ENCODE measurements at regions of chr5 and their contacts with region 1.

Region 1: GRCh38 chr5:175478384-175479124 is at the start of gene SFXN1:
- DNase-seq: peak; percentile 86
- H3K4me3 Mint-ChIP-seq: peak within 1 kb of the TSS; percentile 94
- H3K27ac Mint-ChIP-seq: peak within 1 kb of the TSS; percentile 97
- H3K4me1 Mint-ChIP-seq: peaks cover 56% of the 10 kb centered on the region
- H3K27me3 Mint-ChIP-seq: no peaks in the 10 kb centered on the region
- total RNA-seq, gene SFXN1: 350 to 358 TPM

Region 2: DNA sequence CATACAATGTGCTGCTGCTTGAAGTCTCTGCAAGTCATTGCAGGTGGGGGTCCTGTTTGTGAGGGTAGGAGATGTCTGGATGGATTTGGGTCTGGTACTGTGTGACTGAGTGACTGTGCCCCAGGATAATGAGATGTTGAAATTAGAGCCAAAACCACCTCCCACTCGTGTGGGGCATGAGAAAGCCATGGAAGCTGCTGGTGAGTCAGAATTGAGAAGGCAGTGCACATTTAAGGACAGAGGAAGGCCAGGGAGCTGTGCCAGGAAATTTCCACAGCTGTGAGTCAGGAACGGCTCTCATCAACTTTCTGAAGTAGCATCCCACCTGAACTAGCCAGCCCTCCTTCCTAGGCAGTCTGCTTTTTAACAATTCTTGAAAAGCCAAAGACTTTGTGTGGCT is 264.4 kb before region 1 on chr5:
- CTCF ChIA-PET with region 1: no interaction called
- intact Hi-C with region 1: no loop called
- DNase-seq: no peak
- H3K4me3 Mint-ChIP-seq: no peak overlapping the region
- H3K27ac Mint-ChIP-seq: no peak overlapping the region
- H3K4me1 Mint-ChIP-seq: no peaks in the 10 kb centered on the region
- H3K27me3 Mint-ChIP-seq: peaks cover 17% of the 10 kb centered on the region

Region 3: DNA sequence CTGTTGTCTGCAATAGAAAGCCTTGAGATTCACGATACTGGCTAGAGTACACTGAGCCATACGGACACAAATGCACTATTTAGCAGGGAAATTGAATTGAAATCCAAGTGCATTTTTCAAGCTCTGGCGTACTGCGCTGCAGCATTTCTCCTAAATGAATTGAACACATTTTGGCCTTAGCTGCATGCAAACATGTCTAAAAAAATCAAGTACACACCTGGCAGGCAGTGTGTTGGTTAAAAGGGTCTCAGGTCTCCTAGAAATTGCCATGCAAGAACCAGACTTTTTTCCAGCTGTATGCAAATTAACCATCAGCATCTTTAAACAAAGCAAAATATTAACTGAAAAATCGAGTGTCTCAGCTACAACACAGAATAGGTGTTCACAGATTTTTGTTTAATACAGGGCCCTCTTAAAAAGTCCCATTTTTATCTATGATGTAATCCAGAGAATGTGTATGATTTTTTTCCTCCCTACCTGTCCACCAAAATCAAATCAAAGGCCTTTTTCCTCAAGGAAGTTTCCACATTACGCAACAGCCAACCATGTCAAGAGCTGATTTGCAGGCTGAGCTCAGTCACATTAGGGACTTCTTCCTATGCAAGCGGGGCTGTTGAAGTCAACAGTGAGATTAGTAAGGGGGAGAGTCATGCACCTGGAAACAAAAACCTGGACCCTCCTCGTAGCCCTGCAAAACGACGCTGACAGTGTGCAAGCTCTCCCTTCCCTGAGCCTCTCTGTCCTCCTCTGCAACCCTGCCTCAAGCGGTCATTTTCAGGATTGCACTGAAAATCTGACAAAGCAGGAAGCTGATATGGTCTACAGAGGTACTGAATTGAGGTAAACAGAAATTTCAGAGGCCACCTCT is 14.2 kb before region 1 on chr5:
- CTCF ChIA-PET with region 1: interaction called, 31 read pairs
- intact Hi-C with region 1: no loop called
- DNase-seq: peak; percentile 90
- H3K4me3 Mint-ChIP-seq: no peak overlapping the region
- H3K27ac Mint-ChIP-seq: no peak overlapping the region
- H3K4me1 Mint-ChIP-seq: peaks cover 16% of the 10 kb centered on the region
- H3K27me3 Mint-ChIP-seq: no peaks in the 10 kb centered on the region

Region 4: DNA sequence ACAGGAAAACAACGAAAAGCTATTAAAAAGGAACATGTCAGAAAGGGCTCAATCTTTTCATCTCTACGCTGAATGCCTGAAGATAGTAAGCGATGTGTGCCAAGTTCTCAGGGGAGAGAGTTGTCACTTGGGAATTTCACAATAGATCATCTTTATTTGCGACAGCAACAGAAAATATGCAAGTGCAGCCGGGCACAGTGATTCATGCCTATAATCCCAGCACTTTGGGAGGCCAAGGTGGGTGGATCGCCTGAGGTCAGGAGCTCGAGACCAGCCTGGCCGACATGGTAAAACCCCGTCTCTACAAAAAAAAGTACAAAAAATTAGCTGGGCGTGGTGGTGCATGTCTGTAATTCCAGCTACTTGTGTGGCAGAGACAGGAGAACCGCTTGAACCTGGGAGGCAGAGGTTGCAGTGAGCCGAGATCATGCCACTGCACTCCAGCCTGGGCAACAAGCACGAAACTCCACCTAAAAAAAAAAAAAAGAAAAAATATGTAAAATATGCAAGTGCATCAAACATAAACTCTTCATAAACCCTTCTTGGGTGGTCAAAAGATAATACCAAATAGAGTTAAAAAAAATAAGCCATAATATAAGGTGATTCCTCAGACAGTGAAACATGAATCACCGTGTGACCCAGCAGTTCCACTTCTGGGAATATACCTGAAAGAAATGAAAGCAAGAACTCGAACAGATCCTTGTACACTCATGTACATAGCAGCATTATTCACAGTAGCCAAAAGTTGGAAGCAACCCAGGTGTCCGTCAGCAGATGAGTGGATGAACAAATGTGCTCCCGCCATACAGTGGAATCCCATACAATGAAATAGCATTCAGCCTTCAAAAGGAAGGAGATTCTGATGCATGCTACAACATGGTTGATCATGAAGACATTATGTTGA is 16.0 kb after region 1 on chr5:
- CTCF ChIA-PET with region 1: interaction called, 4 read pairs
- intact Hi-C with region 1: loop called (anchors 1 kb)
- DNase-seq: peak; percentile 62
- H3K4me3 Mint-ChIP-seq: peak overlapping the region; percentile 1
- H3K27ac Mint-ChIP-seq: peak overlapping the region; percentile 80
- H3K4me1 Mint-ChIP-seq: peaks cover 67% of the 10 kb centered on the region
- H3K27me3 Mint-ChIP-seq: no peaks in the 10 kb centered on the region

Region 5: GRCh38 chr5:175638305-175638704 is 159.8 kb after region 1 on chr5:
- CTCF ChIA-PET with region 1: no interaction called
- intact Hi-C with region 1: no loop called
- DNase-seq: no peak
- H3K4me3 Mint-ChIP-seq: no peak overlapping the region
- H3K27ac Mint-ChIP-seq: no peak overlapping the region
- H3K4me1 Mint-ChIP-seq: peaks cover 26% of the 10 kb centered on the region
- H3K27me3 Mint-ChIP-seq: no peaks in the 10 kb centered on the region

Region 6: GRCh38 chr5:175657593-175658271 is 179.2 kb after region 1 on chr5 and contains the start of gene HRH2:
- CTCF ChIA-PET with region 1: no interaction called
- intact Hi-C with region 1: loop called (anchors 2 kb)
- DNase-seq: peak; percentile 74
- H3K4me3 Mint-ChIP-seq: peak within 1 kb of the TSS; percentile 90
- H3K27ac Mint-ChIP-seq: peak within 1 kb of the TSS; percentile 72
- H3K4me1 Mint-ChIP-seq: peaks cover 79% of the 10 kb centered on the region
- H3K27me3 Mint-ChIP-seq: no peaks in the 10 kb centered on the region
- total RNA-seq, gene HRH2: 8.7 to 10.0 TPM

Region 7: GRCh38 chr5:175696139-175696854 is 217.7 kb after region 1 on chr5:
- CTCF ChIA-PET with region 1: interaction called, 5 read pairs
- intact Hi-C with region 1: loop called (anchors 1 kb)
- DNase-seq: peak; percentile 95
- H3K4me3 Mint-ChIP-seq: peak overlapping the region; percentile 74
- H3K27ac Mint-ChIP-seq: peak overlapping the region; percentile 95
- H3K4me1 Mint-ChIP-seq: peaks cover 29% of the 10 kb centered on the region
- H3K27me3 Mint-ChIP-seq: no peaks in the 10 kb centered on the region

Region 8: DNA sequence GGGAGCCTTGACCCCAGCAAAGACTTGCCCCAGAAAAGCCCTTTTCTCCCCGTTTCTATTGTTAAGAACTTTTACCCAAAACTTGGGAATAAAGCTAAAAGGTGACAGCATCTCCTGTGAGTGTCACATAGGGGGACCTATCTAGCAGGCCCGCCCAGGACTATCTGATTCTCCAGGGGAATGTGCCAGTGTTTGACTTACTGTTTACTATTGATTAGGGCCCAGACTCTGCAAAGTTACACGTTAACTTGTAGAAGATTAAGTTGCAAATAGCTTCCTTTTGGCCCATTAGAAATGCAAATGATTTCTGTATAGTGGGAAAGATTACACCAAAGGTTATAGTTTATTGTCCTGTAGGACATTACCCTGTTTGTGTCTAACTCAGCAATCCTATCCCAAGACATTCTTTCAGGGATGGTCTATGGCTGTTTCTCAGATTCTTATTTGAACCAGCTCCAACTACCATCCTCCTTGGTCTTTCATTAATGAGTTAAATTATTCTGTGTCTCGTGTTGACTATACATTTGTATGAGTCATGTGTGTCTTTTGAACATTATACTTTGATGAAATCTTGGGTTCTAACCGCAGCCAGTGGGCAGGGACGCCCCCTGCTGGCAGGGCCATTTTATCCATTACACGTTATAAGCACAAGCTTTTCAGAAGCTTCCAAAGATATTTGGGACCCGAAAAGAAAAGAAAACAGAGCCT is 240.0 kb after region 1 on chr5:
- CTCF ChIA-PET with region 1: interaction called, 4 read pairs
- intact Hi-C with region 1: loop called (anchors 5 kb)
- DNase-seq: peak; percentile 86
- H3K4me3 Mint-ChIP-seq: no peak overlapping the region
- H3K27ac Mint-ChIP-seq: no peak overlapping the region
- H3K4me1 Mint-ChIP-seq: peaks cover 6% of the 10 kb centered on the region
- H3K27me3 Mint-ChIP-seq: no peaks in the 10 kb centered on the region

Region 9: GRCh38 chr5:175796536-175797499 is 318.3 kb after region 1 on chr5:
- CTCF ChIA-PET with region 1: no interaction called
- intact Hi-C with region 1: loop called (anchors 2 kb)
- DNase-seq: peak; percentile 90
- H3K4me3 Mint-ChIP-seq: no peak overlapping the region
- H3K27ac Mint-ChIP-seq: no peak overlapping the region
- H3K4me1 Mint-ChIP-seq: peaks cover 8% of the 10 kb centered on the region
- H3K27me3 Mint-ChIP-seq: peaks cover 64% of the 10 kb centered on the region

Measured in activated naive CD4-positive, alpha-beta T cell treated with anti-CD3 and anti-CD28 coated beads for 36 hours (primary cell).